Motor neuron (in vitro differentiated cells): ENCODE measurements at regions of chr2 and their contacts with region 1.

Region 1: DNA sequence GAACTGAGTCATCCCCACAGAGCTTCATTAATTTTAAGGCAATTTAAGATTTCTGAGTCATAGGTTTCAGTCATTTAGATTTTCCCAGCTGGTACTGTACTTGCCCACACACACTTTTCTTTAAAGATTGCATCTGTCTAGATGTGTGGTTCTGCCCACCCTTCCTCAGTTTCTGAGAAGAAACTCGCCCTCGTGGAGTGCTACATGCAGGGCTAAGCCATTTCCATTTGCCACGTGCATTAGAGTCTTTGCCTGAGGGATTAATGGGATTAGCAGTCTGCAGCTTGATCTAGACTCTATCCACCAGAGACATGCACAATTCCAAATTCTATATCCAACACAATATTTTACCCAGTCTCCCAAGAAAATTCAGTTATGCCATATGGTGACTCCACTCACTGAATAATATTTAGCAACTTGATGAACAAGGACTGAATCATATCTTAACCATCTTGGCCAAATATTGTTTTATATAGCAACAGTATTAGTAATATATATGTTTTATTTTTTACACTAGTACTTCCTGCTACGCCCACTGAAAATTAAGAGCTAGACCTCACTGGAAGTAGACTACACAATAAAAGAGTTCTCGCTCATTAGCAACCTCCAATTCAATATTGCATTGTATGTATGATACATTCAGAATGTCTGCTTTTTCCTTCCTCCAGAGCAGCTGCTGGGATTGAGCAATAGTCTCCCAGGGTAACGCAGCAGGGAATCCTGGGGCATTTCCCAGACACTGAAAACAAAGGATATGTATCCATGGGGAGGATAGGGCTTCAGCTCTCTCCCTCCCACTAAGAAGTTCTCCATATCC is 14.2 kb upstream of the TRIB2 start:
- ATAC-seq: peak; percentile 85 to 98 (median 94)
- H3K4me3 ChIP-seq: no peak overlapping the region
- H3K27ac ChIP-seq: no peak overlapping the region
- H3K4me1 ChIP-seq: peaks cover 15 to 21% of the 10 kb centered on the region in 2 donors

Region 2: GRCh38 chr2:12555012-12555645 is 147.4 kb before region 1 on chr2:
- in situ Hi-C with region 1: loop called in 1 of 9 experiments (anchors 10 kb)
- ATAC-seq: peak; percentile 64 to 95 (median 82)
- H3K4me3 ChIP-seq: no peak overlapping the region
- H3K27ac ChIP-seq: peak overlapping the region in 1 of 2 donors; percentile 31
- H3K4me1 ChIP-seq: peaks cover 15 to 22% of the 10 kb centered on the region in 2 donors

Region 3: DNA sequence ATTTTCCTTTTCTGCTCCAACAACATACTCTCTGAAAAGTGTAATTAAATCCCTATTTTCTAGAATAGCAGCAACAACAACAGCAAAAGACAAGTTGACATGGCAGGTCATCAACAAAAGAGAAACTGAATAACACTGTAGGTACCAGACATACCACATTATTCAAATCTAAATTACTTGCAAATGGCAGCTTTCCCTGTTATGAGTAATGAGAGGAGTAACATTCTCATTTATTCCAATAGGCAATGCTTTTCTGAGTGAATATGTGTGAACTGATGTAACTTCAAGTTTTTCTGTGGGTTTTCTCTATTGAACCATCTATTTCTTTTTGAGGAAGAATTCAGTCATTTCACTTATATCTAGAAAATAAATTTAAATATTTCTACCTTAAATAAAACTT is 515.7 kb after region 1 on chr2:
- in situ Hi-C with region 1: no loop called
- ATAC-seq: peak in 1 of 8 experiments; percentile 41
- H3K4me3 ChIP-seq: no peak overlapping the region
- H3K27ac ChIP-seq: no peak overlapping the region
- H3K4me1 ChIP-seq: no peaks in the 10 kb centered on the region